ENCODE measurements at regions of chr10 and their contacts with region 1.

Region 1: DNA sequence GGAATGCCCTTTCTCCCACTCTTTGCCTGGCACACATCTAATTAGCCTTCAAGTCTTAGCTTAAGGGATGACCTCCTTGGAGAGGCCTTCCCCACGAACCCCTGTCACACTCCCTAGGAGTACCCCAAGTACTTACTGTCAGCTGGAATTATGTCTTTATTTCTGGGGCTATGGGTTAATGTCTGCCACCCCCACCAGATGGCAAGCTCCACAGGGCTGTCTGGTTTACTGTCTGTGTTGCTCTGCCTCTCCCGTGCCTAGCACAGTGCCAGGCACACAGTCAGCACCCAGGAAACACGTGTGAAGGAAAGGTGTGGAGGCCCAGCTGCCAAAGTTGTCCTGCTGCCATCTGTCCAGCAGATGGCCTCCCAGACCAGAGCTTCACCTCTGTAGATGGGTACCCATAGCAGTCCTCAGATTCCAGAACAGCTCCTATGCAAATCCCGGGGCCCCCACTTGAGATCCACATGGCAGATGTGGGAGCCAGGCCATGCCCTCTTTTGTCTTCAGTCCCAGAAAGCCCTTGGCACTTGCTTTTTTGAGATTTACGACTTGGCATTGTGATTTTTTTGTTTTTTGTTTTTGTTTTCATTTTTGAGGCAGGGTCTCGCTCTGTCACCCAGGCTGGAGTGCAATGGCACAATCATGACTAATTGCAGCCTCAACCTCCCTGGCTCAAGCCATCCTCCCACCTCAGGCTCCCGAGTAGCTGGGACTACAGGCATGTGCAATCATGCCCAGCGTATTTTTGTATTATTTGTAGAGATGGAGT is 17.2 kb upstream of the PALD1 start:
- DNase-seq: peak; percentile 85
- H3K4me3 ChIP-seq: no peak overlapping the region; a peak in 1 of 4 replicates
- H3K27ac ChIP-seq: no peak overlapping the region
- H3K4me1 ChIP-seq: peaks cover 0 to 24% of the 10 kb centered on the region in 2 experiments; a peak in 1 of 4 replicates
- H3K27me3 ChIP-seq: peaks cover 8% of the 10 kb centered on the region; the same call in 1 of the 2 replicates
- CTCF ChIP-seq: peak; percentile 82
- EP300 ChIP-seq: no peak
- RAD21 ChIP-seq: peak; percentile 94

Region 2: DNA sequence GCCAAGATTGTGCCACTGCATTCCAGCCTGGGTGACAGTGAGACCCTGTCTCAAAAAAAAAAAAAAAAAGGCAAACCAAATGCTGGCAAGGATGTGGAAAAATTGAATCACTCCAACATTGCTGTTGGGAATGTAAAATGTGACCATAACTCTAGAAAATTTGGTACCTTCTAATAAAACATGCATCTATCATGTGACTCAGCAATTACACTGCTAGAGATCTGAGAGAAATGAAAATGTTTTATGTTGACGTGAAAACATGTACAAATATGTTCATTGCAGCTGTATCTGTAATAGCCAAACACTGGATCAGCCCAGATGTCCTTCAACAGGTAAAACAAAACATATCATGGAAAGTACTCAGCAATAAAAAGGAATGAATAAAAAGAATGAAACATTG is 260.3 kb before region 1 on chr10:
- CTCF ChIA-PET with region 1: no interaction called
- POLR2A ChIA-PET with region 1: no interaction called
- DNase-seq: no peak
- H3K4me3 ChIP-seq: no peak overlapping the region
- H3K27ac ChIP-seq: no peak overlapping the region
- H3K4me1 ChIP-seq: no peaks in the 10 kb centered on the region
- H3K27me3 ChIP-seq: no peaks in the 10 kb centered on the region
- CTCF ChIP-seq: no peak
- EP300 ChIP-seq: no peak
- RAD21 ChIP-seq: no peak

Region 3: GRCh38 chr10:70221030-70221429 is 240.4 kb before region 1 on chr10:
- CTCF ChIA-PET with region 1: interaction called, 16 read pairs
- POLR2A ChIA-PET with region 1: no interaction called
- DNase-seq: no peak
- H3K4me3 ChIP-seq: no peak overlapping the region
- H3K27ac ChIP-seq: peak overlapping the region in 1 of 2 experiments; percentile 45; a peak in 3 of 4 replicates
- H3K4me1 ChIP-seq: peaks cover 0 to 4% of the 10 kb centered on the region in 2 experiments; a peak in 2 of 4 replicates
- H3K27me3 ChIP-seq: no peaks in the 10 kb centered on the region
- CTCF ChIP-seq: no peak
- EP300 ChIP-seq: no peak
- RAD21 ChIP-seq: no peak

Region 4: DNA sequence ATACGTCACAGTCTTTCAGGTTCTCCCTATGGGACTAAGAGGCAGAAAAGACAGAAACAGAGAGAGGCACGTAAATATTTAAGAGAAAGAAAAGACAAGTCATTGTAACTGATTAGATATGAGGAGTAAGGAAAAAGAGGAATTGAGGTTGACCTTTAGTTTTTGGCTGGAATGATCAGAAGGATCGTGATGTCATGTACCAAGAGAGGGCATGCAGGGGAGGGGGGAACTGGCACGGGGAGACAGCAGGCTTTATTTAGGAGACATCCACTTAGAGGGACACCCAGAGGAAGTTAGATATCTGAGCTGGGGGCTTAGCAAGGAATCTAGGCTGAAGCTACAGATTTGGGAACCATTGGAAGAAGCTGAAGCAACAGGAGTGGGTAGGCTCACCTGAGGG is 69.7 kb before region 1 on chr10:
- CTCF ChIA-PET with region 1: no interaction called
- POLR2A ChIA-PET with region 1: no interaction called
- DNase-seq: no peak
- H3K4me3 ChIP-seq: no peak overlapping the region
- H3K27ac ChIP-seq: no peak overlapping the region
- H3K4me1 ChIP-seq: no peaks in the 10 kb centered on the region
- H3K27me3 ChIP-seq: no peaks in the 10 kb centered on the region; the same call in 1 of the 2 replicates
- CTCF ChIP-seq: no peak
- EP300 ChIP-seq: no peak
- RAD21 ChIP-seq: no peak

Region 5: GRCh38 chr10:70478191-70479164 is 17.1 kb after region 1 on chr10 and contains the start of gene PALD1:
- CTCF ChIA-PET with region 1: interaction called, 44 read pairs
- POLR2A ChIA-PET with region 1: interaction called, 3 read pairs
- DNase-seq: peak; percentile 96
- H3K4me3 ChIP-seq: peak within 1 kb of the TSS; percentile 49 to 53
- H3K27ac ChIP-seq: peak within 1 kb of the TSS in 1 of 2 experiments; percentile 50; a peak in 1 of 4 replicates
- H3K4me1 ChIP-seq: peaks cover 0 to 62% of the 10 kb centered on the region in 2 experiments; a peak in 1 of 4 replicates
- H3K27me3 ChIP-seq: peaks cover 42% of the 10 kb centered on the region; the same call in 1 of the 2 replicates
- CTCF ChIP-seq: no peak
- EP300 ChIP-seq: no peak
- RAD21 ChIP-seq: no peak
- polyA plus RNA-seq, gene PALD1: 0.16 and 0.19 TPM in 2 replicates

Region 6: GRCh38 chr10:70523057-70523456 is 61.7 kb after region 1 on chr10:
- CTCF ChIA-PET with region 1: interaction called, 35 read pairs
- POLR2A ChIA-PET with region 1: no interaction called
- DNase-seq: no peak
- H3K4me3 ChIP-seq: no peak overlapping the region
- H3K27ac ChIP-seq: no peak overlapping the region
- H3K4me1 ChIP-seq: peaks cover 0 to 3% of the 10 kb centered on the region in 2 experiments; a peak in 1 of 4 replicates
- H3K27me3 ChIP-seq: no peaks in the 10 kb centered on the region
- CTCF ChIP-seq: no peak
- EP300 ChIP-seq: no peak
- RAD21 ChIP-seq: no peak

Region 7: GRCh38 chr10:70549962-70550458 is 88.6 kb after region 1 on chr10:
- CTCF ChIA-PET with region 1: interaction called, 190 read pairs
- POLR2A ChIA-PET with region 1: no interaction called
- DNase-seq: peak; percentile 88
- H3K4me3 ChIP-seq: no peak overlapping the region; a peak in 1 of 4 replicates
- H3K27ac ChIP-seq: no peak overlapping the region
- H3K4me1 ChIP-seq: peaks cover 3 to 5% of the 10 kb centered on the region in 2 experiments; a peak in 2 of 4 replicates
- H3K27me3 ChIP-seq: no peaks in the 10 kb centered on the region
- CTCF ChIP-seq: peak; percentile 88
- EP300 ChIP-seq: no peak
- RAD21 ChIP-seq: peak; percentile 98

Region 8: GRCh38 chr10:70880077-70880534 is 418.7 kb after region 1 on chr10:
- CTCF ChIA-PET with region 1: interaction called, 14 read pairs
- POLR2A ChIA-PET with region 1: no interaction called
- DNase-seq: peak; percentile 80
- H3K4me3 ChIP-seq: no peak overlapping the region; a peak in 1 of 4 replicates
- H3K27ac ChIP-seq: peak overlapping the region in 1 of 2 experiments; percentile 58; a peak in 2 of 4 replicates
- H3K4me1 ChIP-seq: peaks cover 0 to 26% of the 10 kb centered on the region in 2 experiments; a peak in 2 of 4 replicates
- H3K27me3 ChIP-seq: no peaks in the 10 kb centered on the region
- CTCF ChIP-seq: peak; percentile 95
- EP300 ChIP-seq: no peak
- RAD21 ChIP-seq: peak; percentile 98

Measured in SK-N-SH (cell line).